Activated T-helper 2 cell treated with anti-CD3 and anti-CD28 coated beads, Interferon-gamma antibody, Interleukin-2, Interleukin-4, amounts not matched to agents 10 μg/mL and 5 μg/mL and 100 μg/mL, durations not matched to agents 14 hours and 24 hours and 36 hours (primary cell): ENCODE measurements at regions of chr12 and their contacts with region 1.

Region 1: GRCh38 chr12:113422030-113422885 is at the start of gene SDSL:
- DNase-seq: peak; percentile 14
- H3K4me3 Mint-ChIP-seq: peak within 1 kb of the TSS; percentile 90
- H3K27ac Mint-ChIP-seq: peak within 1 kb of the TSS; percentile 89
- H3K4me1 Mint-ChIP-seq: peaks cover 7% of the 10 kb centered on the region
- H3K27me3 Mint-ChIP-seq: peaks cover 4% of the 10 kb centered on the region
- total RNA-seq, gene SDSL: 0.46 and 0.67 TPM in 2 replicates

Region 2: GRCh38 chr12:113196996-113197395 is 225.3 kb before region 1 on chr12:
- intact Hi-C with region 1: loop called (anchors 2 kb)
- DNase-seq: peak; percentile 61
- H3K4me3 Mint-ChIP-seq: no peak overlapping the region
- H3K27ac Mint-ChIP-seq: no peak overlapping the region
- H3K4me1 Mint-ChIP-seq: peaks cover 14% of the 10 kb centered on the region
- H3K27me3 Mint-ChIP-seq: no peaks in the 10 kb centered on the region

Region 3: GRCh38 chr12:113310489-113310888 is 111.8 kb before region 1 on chr12:
- intact Hi-C with region 1: loop called (anchors 1 kb)
- DNase-seq: no peak
- H3K4me3 Mint-ChIP-seq: no peak overlapping the region
- H3K27ac Mint-ChIP-seq: no peak overlapping the region
- H3K4me1 Mint-ChIP-seq: peaks cover 2% of the 10 kb centered on the region
- H3K27me3 Mint-ChIP-seq: no peaks in the 10 kb centered on the region

Region 4: GRCh38 chr12:113358381-113359132 is 63.7 kb before region 1 on chr12 and contains the start of gene PLBD2:
- intact Hi-C with region 1: loop called (anchors 2 kb)
- DNase-seq: peak; percentile 88
- H3K4me3 Mint-ChIP-seq: peak within 1 kb of the TSS; percentile 85
- H3K27ac Mint-ChIP-seq: peak within 1 kb of the TSS; percentile 59
- H3K4me1 Mint-ChIP-seq: peaks cover 12% of the 10 kb centered on the region
- H3K27me3 Mint-ChIP-seq: peaks cover 1% of the 10 kb centered on the region
- total RNA-seq, gene PLBD2: 16.2 and 18.6 TPM in 2 replicates